H1 (cell line): ENCODE measurements at regions of chr6 and their contacts with region 1.

Region 1: GRCh38 chr6:26031595-26032339 is 55.5 kb upstream of the HFE start:
- DNase-seq: peak; percentile 82 to 88
- H3K4me3 ChIP-seq: peak overlapping the region; percentile 81 to 95 (median 92)
- H3K27ac ChIP-seq: peak overlapping the region; percentile 96
- H3K4me1 ChIP-seq: peaks cover 2 to 18% (median 13%) of the 10 kb centered on the region in 4 experiments; a peak in 5 of 7 replicates
- H3K27me3 ChIP-seq: no peaks in the 10 kb centered on the region
- CTCF ChIP-seq: no peak
- EP300 ChIP-seq: peak in 1 of 2 experiments; percentile 2; a peak in 1 of 3 replicates
- POLR2A ChIP-seq: peak; percentile 99 to 100
- RAD21 ChIP-seq: no peak

Region 2: DNA sequence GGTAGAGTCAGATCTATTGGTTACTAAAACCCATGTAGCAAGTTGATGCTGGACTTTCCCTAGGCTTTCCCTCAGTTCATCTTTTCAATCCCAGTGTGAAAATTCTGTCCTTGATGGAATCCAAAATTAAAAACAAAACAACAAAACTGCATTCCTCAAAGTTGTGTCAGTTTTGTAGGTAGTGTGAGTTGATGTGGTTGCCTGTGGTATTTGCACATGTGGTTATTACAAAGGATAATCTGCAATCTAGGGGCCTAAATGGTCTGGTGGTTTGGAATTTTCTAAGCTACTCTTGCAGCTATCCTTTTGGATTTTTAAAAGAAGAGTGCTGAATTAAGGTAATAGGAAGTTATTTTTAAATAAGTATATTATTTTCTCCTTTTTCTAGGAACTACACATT is 511.9 kb before region 1 on chr6:
- CTCF ChIA-PET with region 1: no interaction called
- POLR2A ChIA-PET with region 1: no interaction called
- DNase-seq: no peak
- H3K4me3 ChIP-seq: no peak overlapping the region
- H3K27ac ChIP-seq: no peak overlapping the region
- H3K4me1 ChIP-seq: no peaks in the 10 kb centered on the region
- H3K27me3 ChIP-seq: no peaks in the 10 kb centered on the region
- CTCF ChIP-seq: no peak
- EP300 ChIP-seq: no peak
- POLR2A ChIP-seq: no peak
- RAD21 ChIP-seq: no peak

Region 3: GRCh38 chr6:25844518-25844917 is 187.2 kb before region 1 on chr6:
- CTCF ChIA-PET with region 1: no interaction called
- POLR2A ChIA-PET with region 1: no interaction called
- DNase-seq: no peak
- H3K4me3 ChIP-seq: no peak overlapping the region
- H3K27ac ChIP-seq: no peak overlapping the region
- H3K4me1 ChIP-seq: no peaks in the 10 kb centered on the region
- H3K27me3 ChIP-seq: no peaks in the 10 kb centered on the region
- CTCF ChIP-seq: no peak
- EP300 ChIP-seq: no peak
- POLR2A ChIP-seq: no peak
- RAD21 ChIP-seq: no peak

Region 4: GRCh38 chr6:25968769-25969168 is 63.0 kb before region 1 on chr6:
- CTCF ChIA-PET with region 1: no interaction called
- POLR2A ChIA-PET with region 1: no interaction called
- DNase-seq: no peak
- H3K4me3 ChIP-seq: no peak overlapping the region
- H3K27ac ChIP-seq: no peak overlapping the region
- H3K4me1 ChIP-seq: peaks cover 6 to 15% (median 10%) of the 10 kb centered on the region in 4 experiments
- H3K27me3 ChIP-seq: peaks cover 0 to 2% (median 0%) of the 10 kb centered on the region in 4 experiments; a peak in 4 of 7 replicates
- CTCF ChIP-seq: no peak
- EP300 ChIP-seq: no peak
- POLR2A ChIP-seq: no peak
- RAD21 ChIP-seq: no peak

Region 5: DNA sequence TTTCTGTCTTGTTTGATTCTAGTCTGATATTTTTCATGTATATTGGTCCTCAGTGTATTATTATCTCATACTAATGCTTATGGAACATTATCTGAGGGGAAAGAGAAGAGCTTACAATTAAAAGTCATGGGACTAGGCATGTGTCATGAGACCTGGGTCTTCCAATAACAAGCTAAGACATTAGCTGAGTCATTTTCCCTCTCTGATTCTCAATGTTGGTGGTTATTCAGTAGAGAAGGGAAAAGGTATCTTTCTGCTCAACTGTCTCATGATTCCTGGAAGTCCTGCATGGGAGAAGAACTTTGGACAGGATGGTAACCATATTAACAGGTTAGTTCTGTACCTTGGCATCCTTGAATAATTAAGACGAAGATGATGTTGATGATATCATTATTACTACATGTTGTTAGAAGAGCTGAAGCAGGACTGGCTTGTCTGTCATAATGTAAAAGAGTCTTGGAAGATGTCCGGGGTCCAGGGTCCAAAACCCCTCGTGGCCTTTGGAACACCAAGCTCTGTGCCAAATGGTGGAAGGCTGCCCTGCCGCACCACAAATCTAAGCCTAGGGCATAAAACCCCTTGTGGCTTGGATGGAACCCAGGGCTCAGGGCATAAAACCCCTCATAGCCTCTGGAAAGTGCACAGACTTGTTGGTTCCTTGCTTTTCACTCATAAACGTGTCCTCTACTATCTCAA is 50.1 kb before region 1 on chr6:
- CTCF ChIA-PET with region 1: no interaction called
- POLR2A ChIA-PET with region 1: no interaction called
- DNase-seq: no peak
- H3K4me3 ChIP-seq: no peak overlapping the region
- H3K27ac ChIP-seq: no peak overlapping the region
- H3K4me1 ChIP-seq: no peaks in the 10 kb centered on the region; a peak in 1 of 7 replicates
- H3K27me3 ChIP-seq: no peaks in the 10 kb centered on the region
- CTCF ChIP-seq: no peak
- EP300 ChIP-seq: no peak
- POLR2A ChIP-seq: no peak
- RAD21 ChIP-seq: no peak

Region 6: DNA sequence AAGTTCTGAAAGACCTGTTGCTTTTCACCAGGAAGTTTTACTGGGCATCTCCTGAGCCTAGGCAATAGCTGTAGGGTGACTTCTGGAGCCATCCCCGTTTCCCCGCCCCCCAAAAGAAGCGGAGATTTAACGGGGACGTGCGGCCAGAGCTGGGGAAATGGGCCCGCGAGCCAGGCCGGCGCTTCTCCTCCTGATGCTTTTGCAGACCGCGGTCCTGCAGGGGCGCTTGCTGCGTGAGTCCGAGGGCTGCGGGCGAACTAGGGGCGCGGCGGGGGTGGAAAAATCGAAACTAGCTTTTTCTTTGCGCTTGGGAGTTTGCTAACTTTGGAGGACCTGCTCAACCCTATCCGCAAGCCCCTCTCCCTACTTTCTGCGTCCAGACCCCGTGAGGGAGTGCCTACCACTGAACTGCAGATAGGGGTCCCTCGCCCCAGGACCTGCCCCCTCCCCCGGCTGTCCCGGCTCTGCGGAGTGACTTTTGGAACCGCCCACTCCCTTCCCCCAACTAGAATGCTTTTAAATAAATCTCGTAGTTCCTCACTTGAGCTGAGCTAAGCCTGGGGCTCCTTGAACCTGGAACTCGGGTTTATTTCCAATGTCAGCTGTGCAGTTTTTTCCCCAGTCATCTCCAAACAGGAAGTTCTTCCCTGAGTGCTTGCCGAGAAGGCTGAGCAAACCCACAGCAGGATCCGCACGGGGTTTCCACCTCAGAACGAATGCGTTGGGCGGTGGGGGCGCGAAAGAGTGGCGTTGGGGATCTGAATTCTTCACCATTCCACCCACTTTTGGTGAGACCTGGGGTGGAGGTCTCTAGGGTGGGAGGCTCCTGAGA is 55.7 kb after region 1 on chr6 and contains the start of gene HFE:
- CTCF ChIA-PET with region 1: interaction called, 4 read pairs
- POLR2A ChIA-PET with region 1: interaction called, 25 read pairs
- DNase-seq: peak in 1 of 2 experiments; percentile 73
- H3K4me3 ChIP-seq: peak within 1 kb of the TSS; percentile 48 to 65 (median 62)
- H3K27ac ChIP-seq: no peak within 1 kb of the TSS
- H3K4me1 ChIP-seq: peaks cover 0 to 5% (median 1%) of the 10 kb centered on the region in 4 experiments; a peak in 3 of 7 replicates
- H3K27me3 ChIP-seq: no peaks in the 10 kb centered on the region
- CTCF ChIP-seq: peak in 1 of 3 experiments; percentile 1; a peak in 1 of 4 replicates
- EP300 ChIP-seq: no peak
- POLR2A ChIP-seq: peak in 1 of 2 experiments; percentile 55; a peak in 1 of 3 replicates
- RAD21 ChIP-seq: no peak
- total RNA-seq, gene HFE: 1.6 and 2.0 TPM in 2 replicates

Region 7: GRCh38 chr6:26183581-26184366 is 152.0 kb after region 1 on chr6:
- CTCF ChIA-PET with region 1: no interaction called
- POLR2A ChIA-PET with region 1: interaction called, 219 read pairs
- DNase-seq: peak in 1 of 2 experiments; percentile 82
- H3K4me3 ChIP-seq: peak overlapping the region; percentile 45 to 73 (median 70)
- H3K27ac ChIP-seq: peak overlapping the region; percentile 97
- H3K4me1 ChIP-seq: peaks cover 0 to 17% (median 8%) of the 10 kb centered on the region in 4 experiments; a peak in 5 of 7 replicates
- H3K27me3 ChIP-seq: no peaks in the 10 kb centered on the region
- CTCF ChIP-seq: no peak
- EP300 ChIP-seq: no peak
- POLR2A ChIP-seq: peak; percentile 94 to 99
- RAD21 ChIP-seq: no peak

Region 8: GRCh38 chr6:26204332-26205165 is 172.8 kb after region 1 on chr6:
- CTCF ChIA-PET with region 1: no interaction called
- POLR2A ChIA-PET with region 1: interaction called, 352 read pairs
- DNase-seq: peak; percentile 88 to 97
- H3K4me3 ChIP-seq: peak overlapping the region; percentile 64 to 94 (median 82)
- H3K27ac ChIP-seq: peak overlapping the region; percentile 98
- H3K4me1 ChIP-seq: peaks cover 0 to 15% (median 5%) of the 10 kb centered on the region in 4 experiments; a peak in 6 of 7 replicates
- H3K27me3 ChIP-seq: no peaks in the 10 kb centered on the region
- CTCF ChIP-seq: peak in 1 of 3 experiments; percentile 18; a peak in 1 of 4 replicates
- EP300 ChIP-seq: peak; percentile 13 to 95; a peak in 2 of 3 replicates
- POLR2A ChIP-seq: peak; percentile 99 to 100
- RAD21 ChIP-seq: 0 out of 4 replicates have a peak, but pooled peaks of 1 of the 2 experiments have one; percentile 14

Region 9: DNA sequence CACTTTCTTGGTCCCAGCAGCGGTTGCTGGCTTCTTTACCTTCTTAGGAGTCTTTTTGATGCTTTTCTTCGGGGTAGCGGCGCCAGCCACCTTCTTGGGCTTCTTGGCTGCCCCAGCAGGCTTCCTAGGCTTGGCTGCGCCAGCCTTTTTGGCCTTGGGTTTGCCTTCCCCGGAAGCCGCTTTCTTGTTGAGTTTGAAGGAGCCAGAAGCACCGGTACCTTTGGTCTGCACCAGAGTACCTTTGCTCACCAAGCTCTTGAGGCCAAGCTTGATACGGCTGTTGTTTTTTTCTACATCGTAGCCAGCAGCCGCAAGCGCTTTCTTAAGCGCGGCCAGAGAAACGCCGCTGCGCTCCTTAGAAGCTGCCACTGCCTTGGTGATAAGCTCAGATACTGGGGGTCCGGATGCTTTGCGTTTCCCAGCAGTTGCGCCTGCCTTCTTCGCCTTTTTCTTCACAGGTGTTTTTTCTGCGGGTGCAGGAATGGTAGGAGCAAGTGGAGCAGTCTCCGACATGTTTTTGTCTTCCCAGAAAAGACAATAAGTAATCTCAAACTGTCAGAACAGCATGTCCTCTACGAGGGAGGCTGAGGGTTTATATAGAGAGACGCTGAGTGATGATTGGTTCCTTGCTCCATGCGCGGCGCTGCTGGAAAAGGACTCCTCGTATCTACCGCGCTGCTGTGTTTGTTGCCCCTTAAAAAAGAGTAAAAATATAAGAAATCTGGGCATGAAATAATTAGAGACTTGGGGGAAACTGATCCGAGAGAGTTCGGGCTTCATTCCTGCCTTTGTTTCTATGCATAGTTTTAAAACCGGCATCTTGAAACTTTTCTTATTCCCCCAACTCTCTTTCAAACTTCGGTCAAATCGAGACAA is 202.9 kb after region 1 on chr6:
- CTCF ChIA-PET with region 1: no interaction called
- POLR2A ChIA-PET with region 1: interaction called, 119 read pairs
- DNase-seq: peak in 1 of 2 experiments; percentile 85
- H3K4me3 ChIP-seq: peak overlapping the region; percentile 83 to 91 (median 88)
- H3K27ac ChIP-seq: peak overlapping the region; percentile 93
- H3K4me1 ChIP-seq: peaks cover 0 to 3% (median 0%) of the 10 kb centered on the region in 4 experiments; a peak in 3 of 7 replicates
- H3K27me3 ChIP-seq: no peaks in the 10 kb centered on the region
- CTCF ChIP-seq: no peak
- EP300 ChIP-seq: no peak
- POLR2A ChIP-seq: peak; percentile 86
- RAD21 ChIP-seq: no peak

Region 10: DNA sequence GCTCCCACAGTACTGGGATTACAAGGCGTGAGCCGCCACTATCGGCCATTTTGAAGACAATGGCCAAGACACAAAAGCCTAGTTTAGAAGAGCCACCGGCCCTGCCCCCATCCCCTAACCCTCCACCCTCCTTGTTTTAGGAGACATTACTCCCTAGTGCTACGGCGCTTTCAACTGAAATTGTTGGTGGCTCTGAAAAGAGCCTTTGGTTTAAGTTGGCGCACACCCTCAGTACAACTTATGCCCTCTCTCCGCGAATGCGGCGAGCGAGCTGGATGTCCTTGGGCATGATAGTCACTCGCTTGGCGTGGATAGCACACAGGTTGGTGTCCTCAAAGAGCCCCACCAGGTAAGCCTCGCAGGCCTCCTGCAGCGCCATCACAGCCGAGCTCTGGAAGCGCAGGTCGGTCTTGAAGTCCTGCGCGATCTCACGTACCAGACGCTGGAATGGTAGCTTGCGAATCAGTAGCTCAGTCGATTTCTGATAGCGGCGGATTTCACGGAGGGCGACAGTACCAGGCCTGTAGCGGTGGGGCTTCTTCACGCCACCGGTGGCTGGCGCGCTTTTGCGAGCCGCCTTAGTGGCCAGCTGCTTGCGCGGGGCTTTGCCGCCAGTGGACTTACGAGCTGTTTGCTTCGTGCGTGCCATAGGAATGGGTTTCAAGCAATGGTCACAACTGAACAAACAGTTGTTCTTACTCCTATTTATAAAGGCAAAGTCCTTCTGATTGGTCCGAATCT is 218.4 kb after region 1 on chr6:
- CTCF ChIA-PET with region 1: no interaction called
- POLR2A ChIA-PET with region 1: interaction called, 52 read pairs
- DNase-seq: peak in 1 of 2 experiments; percentile 73
- H3K4me3 ChIP-seq: peak overlapping the region; percentile 75 to 98 (median 90)
- H3K27ac ChIP-seq: peak overlapping the region; percentile 97
- H3K4me1 ChIP-seq: peaks cover 0 to 5% (median 4%) of the 10 kb centered on the region in 4 experiments; a peak in 5 of 7 replicates
- H3K27me3 ChIP-seq: no peaks in the 10 kb centered on the region
- CTCF ChIP-seq: peak in 2 of 3 experiments; percentile 23 to 34; a peak in 2 of 4 replicates
- EP300 ChIP-seq: 0 out of 3 replicates have a peak, but pooled peaks of 1 of the 2 experiments have one; percentile 34
- POLR2A ChIP-seq: peak; percentile 98
- RAD21 ChIP-seq: no peak

Region 11: GRCh38 chr6:27838058-27838944 is 1806.5 kb after region 1 on chr6:
- CTCF ChIA-PET with region 1: no interaction called
- POLR2A ChIA-PET with region 1: interaction called, 25 read pairs
- DNase-seq: peak; percentile 76 to 87
- H3K4me3 ChIP-seq: peak overlapping the region; percentile 77 to 96 (median 93)
- H3K27ac ChIP-seq: peak overlapping the region; percentile 98
- H3K4me1 ChIP-seq: peaks cover 0 to 5% (median 2%) of the 10 kb centered on the region in 4 experiments; a peak in 1 of 7 replicates
- H3K27me3 ChIP-seq: no peaks in the 10 kb centered on the region
- CTCF ChIP-seq: no peak
- EP300 ChIP-seq: no peak
- POLR2A ChIP-seq: peak; percentile 88 to 91
- RAD21 ChIP-seq: no peak